PC-9 (cell line): ENCODE measurements at regions of chr12 and their contacts with region 1.

Region 1: DNA sequence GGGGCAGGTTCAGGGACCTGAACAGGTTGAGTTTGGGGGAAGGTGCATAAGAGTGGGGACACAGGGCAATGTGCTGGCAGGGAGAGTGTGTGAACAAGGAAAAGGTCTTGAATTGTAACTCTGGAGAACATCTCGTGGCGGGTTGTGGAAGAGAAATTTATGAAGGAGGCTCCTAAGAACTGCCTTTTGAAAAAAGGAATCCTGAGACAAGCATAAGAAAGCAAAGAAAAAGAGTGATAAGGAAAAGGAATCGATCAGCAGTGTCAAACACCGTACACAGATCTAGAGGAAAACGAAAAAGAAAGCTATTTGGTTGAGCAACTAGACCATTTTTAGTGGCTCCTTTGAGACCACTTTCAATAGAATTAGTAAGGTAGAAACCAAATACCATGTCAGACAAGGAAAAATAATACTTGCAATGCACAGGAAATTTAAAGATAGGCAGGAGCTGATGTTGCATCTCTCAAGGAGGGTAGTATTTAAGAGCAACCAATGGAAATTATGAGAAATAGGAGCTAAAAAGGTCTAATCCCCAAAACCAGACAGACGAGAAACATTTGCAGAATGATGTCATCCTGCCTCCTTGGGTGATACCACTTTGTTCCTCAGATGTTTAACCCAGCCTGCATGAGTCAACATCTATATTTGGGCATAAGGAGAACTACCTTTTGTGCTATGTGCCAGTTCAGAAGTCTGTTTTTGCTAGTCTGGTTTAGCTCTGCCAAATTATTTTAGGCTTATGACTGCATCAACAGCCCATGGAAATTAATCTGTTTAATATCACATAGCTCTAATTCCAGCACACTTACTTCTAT is 64.5 kb upstream of the STK38L start:
- DNase-seq: peak; percentile 73 to 97
- H3K4me3 ChIP-seq: no peak overlapping the region
- H3K27ac ChIP-seq: peak overlapping the region; percentile 90
- H3K4me1 ChIP-seq: peaks cover 66% of the 10 kb centered on the region
- H3K27me3 ChIP-seq: no peaks in the 10 kb centered on the region
- CTCF ChIP-seq: no peak

Region 2: GRCh38 chr12:26832822-26833742 is 346.5 kb before region 1 on chr12 and contains the start of gene ITPR2:
- CTCF ChIA-PET with region 1: no interaction called
- POLR2A ChIA-PET with region 1: no interaction called
- intact Hi-C with region 1: no loop called
- DNase-seq: peak; percentile 80 to 99
- H3K4me3 ChIP-seq: peak within 1 kb of the TSS; percentile 83
- H3K27ac ChIP-seq: peak within 1 kb of the TSS; percentile 61
- H3K4me1 ChIP-seq: peaks cover 14% of the 10 kb centered on the region
- H3K27me3 ChIP-seq: no peaks in the 10 kb centered on the region
- CTCF ChIP-seq: peak; percentile 51; the same call in 1 of the 2 replicates
- total RNA-seq, gene ITPR2: 16.2 and 26.0 TPM in 2 replicates

Region 3: DNA sequence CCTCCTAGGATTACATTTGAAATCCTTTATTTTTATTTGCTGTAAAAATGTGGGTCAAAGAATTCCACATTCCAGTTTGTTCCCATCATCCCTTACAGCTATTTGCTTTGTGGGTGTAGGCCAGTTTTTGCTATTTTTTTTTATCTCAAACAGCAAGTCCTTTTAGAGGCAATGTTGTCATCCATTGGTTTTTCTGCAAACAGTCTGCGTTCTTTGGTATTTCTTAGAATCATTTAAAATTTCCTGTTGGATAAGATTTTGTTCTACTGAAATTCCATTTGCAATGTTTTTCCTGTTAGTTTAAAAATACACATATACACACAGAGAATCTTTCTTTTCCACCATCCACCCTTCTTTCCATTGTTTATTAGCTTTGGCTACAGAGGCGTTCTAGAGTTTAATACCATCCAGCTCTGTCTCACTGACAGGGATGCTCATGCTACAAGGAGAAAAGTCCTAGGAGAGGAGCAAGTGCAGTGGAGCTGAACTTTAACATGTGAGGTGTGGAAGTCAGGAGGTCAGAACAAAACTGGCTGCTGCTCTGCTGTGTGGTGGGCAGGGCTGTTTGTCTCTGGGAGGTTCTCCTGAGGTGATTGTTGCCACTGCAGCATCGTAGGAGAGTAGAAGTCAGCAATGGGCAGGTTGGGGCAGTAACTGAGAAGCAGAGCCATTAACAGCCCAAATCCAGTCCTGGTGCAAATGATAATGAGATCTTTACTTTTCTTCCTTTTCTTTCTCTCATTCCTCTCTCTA is 11.3 kb after region 1 on chr12:
- CTCF ChIA-PET with region 1: interaction called, 3 read pairs
- POLR2A ChIA-PET with region 1: interaction called, 16 read pairs
- intact Hi-C with region 1: loop called (anchors 1 kb)
- DNase-seq: peak in 1 of 2 experiments; percentile 86
- H3K4me3 ChIP-seq: 0 out of 2 replicates have a peak overlapping the region, but pooled peaks have one; percentile 19
- H3K27ac ChIP-seq: peak overlapping the region; percentile 79
- H3K4me1 ChIP-seq: peaks cover 36% of the 10 kb centered on the region
- H3K27me3 ChIP-seq: no peaks in the 10 kb centered on the region
- CTCF ChIP-seq: no peak

Region 4: GRCh38 chr12:27226407-27226929 is 46.9 kb after region 1 on chr12:
- CTCF ChIA-PET with region 1: no interaction called
- POLR2A ChIA-PET with region 1: interaction called, 6 read pairs
- intact Hi-C with region 1: loop called (anchors 1 kb)
- DNase-seq: peak in 1 of 2 experiments; percentile 25
- H3K4me3 ChIP-seq: no peak overlapping the region
- H3K27ac ChIP-seq: peak overlapping the region; percentile 24; the same call in 1 of the 2 replicates
- H3K4me1 ChIP-seq: peaks cover 8% of the 10 kb centered on the region; the same call in 1 of the 2 replicates
- H3K27me3 ChIP-seq: no peaks in the 10 kb centered on the region
- CTCF ChIP-seq: no peak